Cardiac septum (tissue), 1 donor: ENCODE measurements at regions of chr15 and their contacts with region 1.

Region 1: GRCh38 chr15:40440743-40441564 is at the start of gene BAHD1:
- DNase-seq: peak; percentile 99
- total RNA-seq, gene BAHD1: 17.7 TPM

Region 2: DNA sequence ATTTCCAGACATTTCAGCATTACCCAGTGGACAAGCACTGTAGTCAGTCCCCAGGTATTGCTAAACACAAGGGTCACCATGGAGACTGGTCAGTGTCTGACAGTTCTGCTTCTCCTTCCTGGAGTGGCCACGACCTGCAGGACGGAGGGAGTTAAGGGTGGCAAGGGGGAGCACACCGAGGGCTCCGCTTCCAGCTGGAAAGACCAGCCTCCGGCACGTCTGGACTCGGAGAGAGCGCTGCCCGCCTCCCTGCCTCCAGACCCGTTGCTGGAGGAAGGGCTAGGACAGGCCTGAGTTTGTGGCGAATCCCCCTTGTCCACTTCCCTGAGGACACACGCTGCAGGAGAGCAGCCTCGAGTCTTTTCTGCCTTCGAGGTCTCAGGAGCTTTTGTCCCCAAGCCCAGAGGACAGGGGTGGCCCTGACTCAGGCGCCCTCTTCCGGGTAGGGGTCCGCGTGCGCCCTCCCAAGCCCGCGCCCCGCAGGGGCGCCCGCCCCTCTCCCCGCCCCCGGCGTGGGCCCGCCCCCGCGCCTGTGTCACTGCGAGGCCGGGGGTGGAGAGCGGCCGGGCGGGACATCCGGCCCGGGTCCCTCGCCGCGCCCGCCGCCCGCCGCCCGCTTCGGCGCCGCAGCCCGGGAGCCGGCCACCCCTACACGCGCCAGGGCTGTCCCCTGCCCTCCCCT is 29.6 kb after region 1 on chr15 and contains the start of gene CHST14:
- intact Hi-C with region 1: loop called (anchors 1 kb)
- DNase-seq: no peak
- total RNA-seq, gene CHST14: 8.4 TPM

Region 3: DNA sequence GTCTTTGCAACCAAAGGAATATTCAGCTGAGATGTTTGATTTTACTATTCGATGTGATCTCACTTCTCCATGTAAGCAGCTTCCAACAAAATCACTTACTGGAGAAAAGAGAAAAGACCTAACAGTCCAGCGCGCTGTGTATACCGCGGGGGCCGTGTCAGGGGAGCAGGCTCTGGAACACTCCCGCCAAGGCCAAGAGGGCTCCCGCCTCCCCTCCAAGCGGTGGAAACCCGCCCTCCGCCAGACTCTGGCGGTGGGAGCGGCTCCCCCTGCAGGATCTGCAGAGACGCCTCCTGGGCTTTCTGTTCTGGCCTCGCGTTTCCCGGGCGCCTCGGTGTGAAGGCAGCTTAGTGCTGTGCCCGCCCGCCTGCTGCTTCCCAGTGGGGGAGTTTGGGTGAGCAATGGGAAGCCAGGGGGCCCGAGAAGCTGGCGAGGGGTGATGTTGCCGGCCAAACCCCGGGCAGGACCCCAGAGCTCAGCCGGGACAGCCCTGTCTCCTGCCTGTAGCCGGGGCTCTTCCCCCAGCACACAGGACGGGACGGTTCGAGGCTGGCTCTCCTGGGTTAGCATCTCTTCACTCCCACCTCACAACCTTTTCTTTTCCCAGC is 66.1 kb after region 1 on chr15:
- intact Hi-C with region 1: loop called (anchors 5 kb)
- DNase-seq: peak; percentile 82